Sigmoid colon (tissue), 7 donors: ENCODE measurements at regions of chr6 and their contacts with region 1.

Region 1: DNA sequence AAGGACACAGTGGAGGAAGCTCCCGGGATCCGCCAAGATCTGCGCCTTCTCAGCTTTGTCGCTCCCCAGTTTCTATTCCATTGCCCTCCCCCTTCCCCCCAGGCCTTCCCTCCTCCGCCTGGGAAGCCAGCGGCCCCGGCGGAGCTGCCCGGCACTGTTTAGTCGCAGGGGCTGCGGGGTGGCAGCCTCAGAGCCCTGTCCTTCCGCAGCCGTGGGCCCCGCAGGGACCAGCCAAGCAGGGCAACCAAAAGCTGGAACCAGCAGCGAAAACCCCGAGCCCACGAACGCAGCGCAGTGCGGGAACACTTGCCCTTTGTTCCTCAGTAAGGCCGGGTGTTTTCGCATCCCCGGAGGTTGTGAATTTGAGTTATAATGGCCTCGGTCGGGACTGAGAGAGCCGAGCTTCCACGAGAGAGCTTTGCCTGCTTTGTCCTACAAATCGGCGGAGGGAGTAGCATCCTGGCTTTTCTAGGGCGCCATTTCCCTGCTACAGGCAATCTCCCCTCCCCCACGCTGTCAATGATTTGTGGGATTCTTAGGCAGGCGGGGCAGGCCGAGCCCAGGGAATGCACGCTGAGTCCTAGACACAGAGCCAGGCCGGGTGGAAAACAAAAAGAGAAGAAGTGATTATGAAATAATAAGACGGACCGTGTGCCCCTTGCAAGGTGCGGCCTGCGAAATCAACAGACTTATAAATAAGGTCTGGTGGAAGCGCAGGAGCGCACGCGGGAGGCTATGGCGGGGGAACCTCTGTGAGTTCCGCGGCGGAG is 4.0 kb upstream of the TUBB2B start:
- DNase-seq: peak; percentile 91
- H3K4me3 ChIP-seq: peak overlapping the region; percentile 57 to 68 (median 62)
- H3K27ac ChIP-seq: peak overlapping the region; percentile 82 to 91 (median 89)
- H3K4me1 ChIP-seq: peaks cover 0 to 57% (median 49%) of the 10 kb centered on the region in 4 donors
- H3K27me3 ChIP-seq: peaks cover 19 to 70% (median 42%) of the 10 kb centered on the region in 3 donors
- CTCF ChIP-seq: no peak
- EP300 ChIP-seq: peak in 1 of 4 donors; percentile 12
- POLR2A ChIP-seq: peak in 1 of 2 donors; percentile 43

Region 2: DNA sequence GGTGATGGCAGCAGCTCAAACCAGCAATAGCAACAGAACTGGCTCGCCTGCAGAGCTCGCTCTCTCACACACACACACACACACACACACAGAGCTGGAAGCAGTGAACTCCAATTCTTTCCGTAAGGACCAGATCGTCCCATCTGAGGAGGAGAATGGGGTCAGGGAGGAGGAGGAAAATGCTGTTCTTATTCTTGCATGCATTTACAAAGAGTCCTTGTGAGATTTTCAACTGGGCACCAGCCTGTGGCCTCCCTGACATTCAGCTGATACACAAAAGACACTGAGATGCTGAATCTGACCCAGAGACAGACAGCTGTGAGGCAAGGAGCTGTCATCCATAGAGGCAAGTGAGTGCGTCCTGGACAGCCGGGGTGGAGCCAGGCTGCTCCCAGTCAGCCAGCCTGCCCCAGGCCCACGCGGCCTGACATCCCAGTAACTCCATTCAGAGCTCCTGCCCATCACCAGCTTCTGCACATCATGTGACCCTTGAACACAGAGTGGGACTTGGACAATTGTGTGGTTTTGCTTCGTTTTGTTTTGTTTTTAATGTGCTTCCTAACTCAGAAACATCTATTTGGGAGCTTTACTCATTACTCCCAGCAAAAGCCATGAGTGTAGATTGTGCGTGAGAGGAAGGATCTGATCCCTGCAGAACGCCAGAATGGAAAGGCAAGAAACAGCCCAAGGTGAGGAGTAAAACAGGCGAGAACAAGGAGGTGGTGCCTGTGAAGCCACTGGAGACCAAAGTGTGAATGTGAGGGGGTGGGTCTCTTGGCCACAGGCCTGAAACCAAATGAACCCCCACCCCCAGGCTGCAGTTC is 330.4 kb before region 1 on chr6:
- intact Hi-C with region 1: no loop called
- DNase-seq: no peak
- H3K4me3 ChIP-seq: peak overlapping the region in 3 of 4 donors; percentile 66 to 70 (median 69)
- H3K27ac ChIP-seq: peak overlapping the region; percentile 39 to 49 (median 42)
- H3K4me1 ChIP-seq: peaks cover 0 to 29% (median 13%) of the 10 kb centered on the region in 4 donors
- H3K27me3 ChIP-seq: no peaks in the 10 kb centered on the region
- CTCF ChIP-seq: no peak
- EP300 ChIP-seq: no peak
- POLR2A ChIP-seq: no peak

Region 3: DNA sequence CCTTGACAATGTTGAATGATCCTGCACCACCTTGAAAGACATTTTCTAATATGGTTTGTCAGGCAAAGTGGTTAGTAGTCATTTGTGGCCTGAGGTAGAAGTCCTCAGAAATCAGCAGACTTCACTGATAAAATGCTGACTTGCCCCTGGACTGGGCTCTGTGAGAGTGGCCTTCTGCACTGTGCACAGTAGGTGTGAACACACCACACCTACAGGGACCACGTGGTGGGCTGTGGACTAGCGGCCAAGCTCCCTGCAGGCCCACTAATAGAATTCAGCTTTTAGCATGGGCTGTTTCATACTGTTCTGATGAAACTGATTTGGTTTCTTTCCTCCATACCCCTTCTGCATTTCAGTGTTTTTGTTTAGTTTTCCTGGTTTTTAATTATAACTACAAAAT is 105.6 kb before region 1 on chr6:
- intact Hi-C with region 1: loop called (anchors 5 kb)
- DNase-seq: no peak
- H3K4me3 ChIP-seq: no peak overlapping the region
- H3K27ac ChIP-seq: no peak overlapping the region
- H3K4me1 ChIP-seq: no peaks in the 10 kb centered on the region
- H3K27me3 ChIP-seq: no peaks in the 10 kb centered on the region
- CTCF ChIP-seq: no peak
- EP300 ChIP-seq: no peak
- POLR2A ChIP-seq: no peak

Region 4: GRCh38 chr6:3157131-3157927 is 74.1 kb before region 1 on chr6 and contains the start of gene TUBB2A:
- intact Hi-C with region 1: loop called (anchors 2 kb)
- DNase-seq: peak; percentile 95
- H3K4me3 ChIP-seq: peak within 1 kb of the TSS; percentile 66 to 99 (median 71)
- H3K27ac ChIP-seq: peak within 1 kb of the TSS; percentile 90 to 99 (median 96)
- H3K4me1 ChIP-seq: peaks cover 0 to 34% (median 14%) of the 10 kb centered on the region in 4 donors
- H3K27me3 ChIP-seq: no peaks in the 10 kb centered on the region
- CTCF ChIP-seq: peak in 2 of 4 experiments; percentile 12 to 52
- EP300 ChIP-seq: peak in 1 of 4 donors; percentile 45
- POLR2A ChIP-seq: peak; percentile 56 to 81
- total RNA-seq, gene TUBB2A: 54.5 to 106 (median 97.9) TPM